CD8-positive, alpha-beta memory T cell (primary cell): ENCODE measurements at regions of chr14 and their contacts with region 1.

Region 1: GRCh38 chr14:65412032-65412846 is at the start of gene FUT8:
- DNase-seq: peak; percentile 93 to 98 (median 94)
- H3K4me3 ChIP-seq: peak within 1 kb of the TSS; percentile 89
- H3K4me3 Mint-ChIP-seq: peak within 1 kb of the TSS; percentile 94 to 99 (median 97)
- H3K27ac ChIP-seq: peak within 1 kb of the TSS; percentile 80
- H3K27ac Mint-ChIP-seq: peak within 1 kb of the TSS; percentile 83 to 99 (median 96)
- H3K4me1 ChIP-seq: peaks cover 19% of the 10 kb centered on the region
- H3K4me1 Mint-ChIP-seq: peaks cover 39 to 53% (median 46%) of the 10 kb centered on the region in 3 donors
- H3K27me3 ChIP-seq: no peaks in the 10 kb centered on the region
- H3K27me3 Mint-ChIP-seq: no peaks in the 10 kb centered on the region
- total RNA-seq, gene FUT8: 76.0 to 81.7 TPM

Region 2: GRCh38 chr14:65174783-65175182 is 237.5 kb before region 1 on chr14:
- CTCF ChIA-PET with region 1: no interaction called
- POLR2A ChIA-PET with region 1: no interaction called
- DNase-seq: no peak
- H3K4me3 ChIP-seq: no peak overlapping the region
- H3K4me3 Mint-ChIP-seq: no peak overlapping the region
- H3K27ac ChIP-seq: no peak overlapping the region
- H3K27ac Mint-ChIP-seq: no peak overlapping the region
- H3K4me1 ChIP-seq: peaks cover 7% of the 10 kb centered on the region
- H3K4me1 Mint-ChIP-seq: peaks cover 5 to 14% (median 13%) of the 10 kb centered on the region in 3 donors
- H3K27me3 ChIP-seq: peaks cover 4% of the 10 kb centered on the region
- H3K27me3 Mint-ChIP-seq: peaks cover 10 to 19% of the 10 kb centered on the region in 2 donors

Region 3: GRCh38 chr14:65287264-65288131 is 124.7 kb before region 1 on chr14:
- CTCF ChIA-PET with region 1: interaction called, 41 read pairs
- POLR2A ChIA-PET with region 1: interaction called, 22 read pairs
- DNase-seq: peak; percentile 6 to 80 (median 64)
- H3K4me3 ChIP-seq: peak overlapping the region; percentile 50
- H3K4me3 Mint-ChIP-seq: peak overlapping the region; percentile 62 to 87 (median 83)
- H3K27ac ChIP-seq: no peak overlapping the region
- H3K27ac Mint-ChIP-seq: peak overlapping the region; percentile 85 to 98 (median 96)
- H3K4me1 ChIP-seq: peaks cover 67% of the 10 kb centered on the region
- H3K4me1 Mint-ChIP-seq: peaks cover 62 to 71% (median 70%) of the 10 kb centered on the region in 3 donors
- H3K27me3 ChIP-seq: no peaks in the 10 kb centered on the region
- H3K27me3 Mint-ChIP-seq: no peaks in the 10 kb centered on the region

Region 4: DNA sequence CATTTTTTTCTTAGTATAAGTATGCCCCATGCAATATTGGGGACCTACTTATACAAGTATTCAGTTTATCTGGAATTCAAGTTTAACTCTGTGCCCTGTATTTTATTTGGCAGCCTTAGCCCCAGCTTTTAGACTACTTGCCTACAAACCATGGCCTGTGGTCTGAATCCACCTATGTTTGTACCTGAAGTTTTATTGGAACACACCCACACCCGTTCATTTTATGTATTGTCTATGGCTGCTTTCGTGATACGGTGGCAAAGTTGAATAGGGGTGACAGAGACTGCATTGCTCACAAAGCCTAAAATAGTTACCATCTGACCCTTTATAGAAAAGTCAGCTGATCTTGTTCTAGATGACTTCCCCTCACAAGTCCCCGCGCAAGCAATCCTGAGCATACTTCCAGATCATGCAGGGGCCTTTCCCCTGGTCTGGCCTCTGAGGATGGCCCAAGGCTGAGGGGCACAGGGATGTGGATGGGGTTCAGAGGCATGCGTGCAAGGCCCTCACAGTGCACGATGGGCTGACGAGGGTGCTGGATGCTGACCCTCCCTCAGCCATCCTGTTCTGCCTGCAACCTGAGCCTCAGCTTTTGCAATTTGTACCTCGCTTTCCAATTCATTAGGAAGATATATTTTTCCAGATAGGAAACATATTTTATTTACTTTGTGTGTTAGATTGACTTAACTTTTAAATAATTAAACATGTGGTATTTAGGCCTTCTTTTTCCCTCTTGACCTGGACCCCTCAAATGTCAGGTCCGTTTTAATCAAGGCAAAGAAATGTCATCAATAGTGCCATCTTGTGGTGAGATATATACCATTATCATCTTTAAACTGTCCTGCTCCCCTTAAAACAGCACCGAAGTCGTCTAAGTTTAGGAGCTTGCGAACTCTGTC is 546.7 kb after region 1 on chr14:
- CTCF ChIA-PET with region 1: interaction called, 74 read pairs
- POLR2A ChIA-PET with region 1: no interaction called
- DNase-seq: peak in 2 of 5 donors; percentile 22 to 46
- H3K4me3 ChIP-seq: no peak overlapping the region
- H3K4me3 Mint-ChIP-seq: no peak overlapping the region
- H3K27ac ChIP-seq: no peak overlapping the region
- H3K27ac Mint-ChIP-seq: no peak overlapping the region
- H3K4me1 ChIP-seq: peaks cover 16% of the 10 kb centered on the region
- H3K4me1 Mint-ChIP-seq: peaks cover 25% of the 10 kb centered on the region in 3 donors
- H3K27me3 ChIP-seq: no peaks in the 10 kb centered on the region
- H3K27me3 Mint-ChIP-seq: no peaks in the 10 kb centered on the region

Region 5: GRCh38 chr14:66070509-66071319 is 658.5 kb after region 1 on chr14:
- CTCF ChIA-PET with region 1: interaction called, 55 read pairs
- POLR2A ChIA-PET with region 1: no interaction called
- DNase-seq: peak; percentile 49 to 75 (median 56)
- H3K4me3 ChIP-seq: no peak overlapping the region
- H3K4me3 Mint-ChIP-seq: no peak overlapping the region
- H3K27ac ChIP-seq: no peak overlapping the region
- H3K27ac Mint-ChIP-seq: peak overlapping the region in 1 of 8 donors; percentile 43
- H3K4me1 ChIP-seq: no peaks in the 10 kb centered on the region
- H3K4me1 Mint-ChIP-seq: peaks cover 4 to 5% (median 4%) of the 10 kb centered on the region in 3 donors
- H3K27me3 ChIP-seq: no peaks in the 10 kb centered on the region
- H3K27me3 Mint-ChIP-seq: peaks cover 4 to 19% of the 10 kb centered on the region in 2 donors

Region 6: GRCh38 chr14:66254038-66254437 is 841.8 kb after region 1 on chr14:
- CTCF ChIA-PET with region 1: no interaction called
- POLR2A ChIA-PET with region 1: no interaction called
- DNase-seq: no peak
- H3K4me3 ChIP-seq: no peak overlapping the region
- H3K4me3 Mint-ChIP-seq: no peak overlapping the region
- H3K27ac ChIP-seq: no peak overlapping the region
- H3K27ac Mint-ChIP-seq: no peak overlapping the region
- H3K4me1 ChIP-seq: no peaks in the 10 kb centered on the region
- H3K4me1 Mint-ChIP-seq: no peaks in the 10 kb centered on the region
- H3K27me3 ChIP-seq: no peaks in the 10 kb centered on the region
- H3K27me3 Mint-ChIP-seq: peaks cover 2 to 7% of the 10 kb centered on the region in 2 donors